HEK293 (cell line): ENCODE measurements at regions of chr9 and their contacts with region 1.

Region 1: DNA sequence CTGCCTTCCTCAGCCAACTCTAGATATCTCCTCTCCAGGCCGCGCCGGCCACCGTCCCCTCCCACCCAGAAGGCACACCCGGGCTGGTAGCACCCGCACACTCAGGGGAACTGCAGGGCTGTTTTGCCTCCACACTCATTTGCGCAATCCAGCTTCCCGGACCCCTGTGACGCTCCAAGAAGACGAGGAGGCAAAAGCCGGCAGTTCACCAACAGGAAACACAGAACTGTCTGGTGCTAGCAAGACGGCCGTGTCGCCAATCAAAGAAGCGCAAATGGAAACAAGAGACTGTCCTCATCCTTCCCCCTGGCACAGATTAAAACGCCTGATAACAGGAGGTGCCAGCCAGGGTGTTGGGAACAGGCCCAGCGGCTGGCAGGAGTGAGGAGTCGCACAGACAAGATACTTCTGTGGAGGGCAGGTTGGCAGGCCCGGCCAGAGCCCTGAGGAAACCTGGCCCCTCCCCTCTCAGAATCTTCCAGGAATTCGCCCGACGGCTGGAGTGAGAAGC is 7.8 kb downstream of the AGPAT2 start:
- H3K4me3 ChIP-seq: no peak overlapping the region
- H3K27ac ChIP-seq: no peak overlapping the region
- H3K4me1 ChIP-seq: no peaks in the 10 kb centered on the region
- CTCF ChIP-seq: no peak

Region 2: DNA sequence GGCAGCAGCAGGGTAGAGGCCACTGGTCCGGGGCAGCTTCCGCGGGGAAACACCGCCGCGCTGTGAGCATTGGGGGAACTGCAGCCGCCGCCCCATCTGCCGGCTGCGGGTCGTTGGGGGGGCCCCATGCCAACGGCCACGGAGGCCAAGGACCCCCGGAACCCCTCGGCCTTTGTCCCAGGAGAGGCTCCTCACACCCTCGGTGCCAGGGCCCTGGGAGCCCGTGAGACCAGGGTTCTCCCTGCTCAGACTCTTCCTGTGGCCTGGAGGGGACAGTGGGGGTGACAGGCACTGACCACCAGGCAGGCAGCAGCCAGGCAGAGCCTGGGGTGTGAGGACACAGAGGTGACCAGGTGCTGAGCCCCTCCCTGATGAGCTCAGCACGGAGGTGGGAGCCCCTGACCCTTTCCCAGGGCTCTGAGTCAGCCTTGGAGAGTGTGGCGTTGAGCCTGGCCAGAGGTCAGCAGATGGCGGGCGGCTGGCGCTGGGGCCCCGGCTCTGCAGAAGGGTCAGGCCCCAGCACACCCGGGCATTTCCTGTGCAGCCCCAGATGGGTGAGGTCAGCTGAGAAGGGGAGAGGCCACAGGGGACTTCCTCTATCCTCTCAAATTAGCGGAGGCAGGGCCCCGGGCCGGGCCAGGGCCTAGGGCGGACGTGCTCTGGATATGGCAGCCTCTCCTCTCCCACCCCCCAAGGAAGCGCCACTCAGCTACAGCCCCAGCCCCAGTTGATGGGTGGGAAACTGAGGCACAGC is 34.7 kb before region 1 on chr9:
- CTCF ChIA-PET with region 1: no interaction called
- POLR2A ChIA-PET with region 1: no interaction called
- H3K4me3 ChIP-seq: no peak overlapping the region
- H3K27ac ChIP-seq: no peak overlapping the region
- H3K4me1 ChIP-seq: no peaks in the 10 kb centered on the region
- CTCF ChIP-seq: peak; percentile 91

Region 3: DNA sequence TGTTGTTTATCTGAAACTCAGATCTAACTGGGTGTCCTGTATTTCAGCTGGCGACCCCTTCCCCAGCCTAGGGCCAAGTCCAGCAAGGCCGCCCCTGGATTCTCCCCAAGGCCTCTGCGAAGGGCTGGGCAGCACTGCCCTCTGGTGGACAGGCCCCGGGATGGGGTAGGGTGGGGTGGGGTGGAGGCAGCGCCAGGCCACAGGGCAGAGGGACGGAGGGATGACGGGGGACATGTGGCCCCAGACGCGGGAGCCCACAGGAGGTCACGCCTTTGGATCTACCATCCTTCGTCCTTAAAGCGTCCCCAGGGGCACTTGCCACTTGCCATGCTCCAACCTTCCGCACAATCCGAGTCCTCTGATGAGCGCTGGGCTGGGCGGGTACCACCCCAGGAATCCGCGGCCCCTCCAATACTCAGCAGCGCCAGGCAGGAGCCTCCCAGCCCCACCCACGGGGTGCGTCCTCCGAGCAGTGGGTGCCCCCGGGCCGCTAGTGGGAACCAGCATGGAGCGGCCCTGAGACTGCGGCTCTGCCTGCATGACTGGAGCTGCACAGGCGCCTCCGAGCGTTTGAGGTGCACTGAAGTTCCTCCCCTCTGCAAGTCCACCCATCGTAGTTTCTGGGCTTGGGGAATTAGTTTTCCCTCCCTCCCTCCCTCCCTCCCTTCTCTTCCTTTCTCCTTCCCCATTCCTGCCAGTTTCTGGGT is 14.9 kb after region 1 on chr9:
- CTCF ChIA-PET with region 1: interaction called, 13 read pairs
- POLR2A ChIA-PET with region 1: interaction called, 4 read pairs
- H3K4me3 ChIP-seq: no peak overlapping the region
- H3K27ac ChIP-seq: no peak overlapping the region
- H3K4me1 ChIP-seq: no peaks in the 10 kb centered on the region
- CTCF ChIP-seq: peak; percentile 69